HepG2 (cell line): ENCODE measurements at regions of chr2 and their contacts with region 1.

Region 1: DNA sequence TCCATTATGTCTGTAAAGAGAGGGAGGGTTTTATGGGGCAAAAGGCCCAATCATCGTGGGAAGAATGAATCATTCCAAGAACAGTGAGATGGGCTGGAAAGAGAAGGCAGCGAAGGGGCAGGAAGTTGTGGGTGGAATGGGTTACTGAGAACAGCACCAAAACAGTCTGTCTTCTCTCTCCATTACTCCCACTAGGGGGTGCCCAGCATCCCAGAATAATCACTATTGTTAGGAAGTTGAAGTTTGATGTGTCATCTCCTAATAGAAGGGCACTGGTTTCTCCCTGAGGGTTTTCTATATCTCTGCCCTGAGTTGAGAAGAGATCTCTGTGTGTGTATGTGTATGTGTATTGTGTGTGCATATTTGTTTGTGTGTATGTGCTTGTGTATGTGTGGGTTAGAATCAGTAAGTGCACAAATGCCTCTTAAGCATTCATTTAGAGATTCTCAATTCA is 76.6 kb upstream of the MAP4K3 start:
- DNase-seq: peak; percentile 83
- ATAC-seq: 0 out of 3 replicates have a peak, but pooled peaks have one; percentile 4
- H3K4me3 ChIP-seq: no peak overlapping the region
- H3K27ac ChIP-seq: peak overlapping the region; percentile 92
- H3K4me1 ChIP-seq: peaks cover 94% of the 10 kb centered on the region
- H3K27me3 ChIP-seq: no peaks in the 10 kb centered on the region
- CTCF ChIP-seq: peak; percentile 85
- EP300 ChIP-seq: peak in 1 of 2 experiments; percentile 35; a peak in 1 of 4 replicates
- POLR2A ChIP-seq: no peak
- RAD21 ChIP-seq: peak; percentile 72

Region 2: DNA sequence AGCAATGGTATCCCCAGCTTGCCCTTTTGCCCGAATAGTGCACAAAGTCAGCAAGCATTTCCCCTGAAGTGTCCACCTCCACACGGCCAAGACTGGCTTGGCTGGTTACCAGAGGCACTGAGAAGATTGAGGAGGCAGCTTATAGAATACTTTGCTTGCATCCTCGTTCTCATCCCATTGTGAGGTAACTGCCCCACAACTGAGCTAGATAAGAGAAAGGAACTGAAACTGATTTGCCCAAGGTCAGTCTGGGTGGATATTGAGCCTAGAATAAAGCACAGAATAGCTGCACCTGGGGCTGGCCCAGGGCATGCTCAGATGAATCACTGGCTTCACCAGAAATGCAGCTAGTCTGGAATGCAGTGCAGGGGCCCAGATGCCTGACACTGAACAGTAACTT is 43.9 kb before region 1 on chr2:
- CTCF ChIA-PET with region 1: no interaction called
- POLR2A ChIA-PET with region 1: interaction called, 14 read pairs
- in situ Hi-C with region 1: no loop called
- intact Hi-C with region 1: no loop called
- DNase-seq: peak; percentile 88
- ATAC-seq: peak; percentile 98
- H3K4me3 ChIP-seq: peak overlapping the region in 2 of 3 experiments; percentile 27 to 35; a peak in 2 of 6 replicates
- H3K27ac ChIP-seq: peak overlapping the region; percentile 54
- H3K4me1 ChIP-seq: peaks cover 38% of the 10 kb centered on the region
- H3K27me3 ChIP-seq: no peaks in the 10 kb centered on the region
- CTCF ChIP-seq: no peak
- EP300 ChIP-seq: no peak
- POLR2A ChIP-seq: no peak
- RAD21 ChIP-seq: no peak

Region 3: DNA sequence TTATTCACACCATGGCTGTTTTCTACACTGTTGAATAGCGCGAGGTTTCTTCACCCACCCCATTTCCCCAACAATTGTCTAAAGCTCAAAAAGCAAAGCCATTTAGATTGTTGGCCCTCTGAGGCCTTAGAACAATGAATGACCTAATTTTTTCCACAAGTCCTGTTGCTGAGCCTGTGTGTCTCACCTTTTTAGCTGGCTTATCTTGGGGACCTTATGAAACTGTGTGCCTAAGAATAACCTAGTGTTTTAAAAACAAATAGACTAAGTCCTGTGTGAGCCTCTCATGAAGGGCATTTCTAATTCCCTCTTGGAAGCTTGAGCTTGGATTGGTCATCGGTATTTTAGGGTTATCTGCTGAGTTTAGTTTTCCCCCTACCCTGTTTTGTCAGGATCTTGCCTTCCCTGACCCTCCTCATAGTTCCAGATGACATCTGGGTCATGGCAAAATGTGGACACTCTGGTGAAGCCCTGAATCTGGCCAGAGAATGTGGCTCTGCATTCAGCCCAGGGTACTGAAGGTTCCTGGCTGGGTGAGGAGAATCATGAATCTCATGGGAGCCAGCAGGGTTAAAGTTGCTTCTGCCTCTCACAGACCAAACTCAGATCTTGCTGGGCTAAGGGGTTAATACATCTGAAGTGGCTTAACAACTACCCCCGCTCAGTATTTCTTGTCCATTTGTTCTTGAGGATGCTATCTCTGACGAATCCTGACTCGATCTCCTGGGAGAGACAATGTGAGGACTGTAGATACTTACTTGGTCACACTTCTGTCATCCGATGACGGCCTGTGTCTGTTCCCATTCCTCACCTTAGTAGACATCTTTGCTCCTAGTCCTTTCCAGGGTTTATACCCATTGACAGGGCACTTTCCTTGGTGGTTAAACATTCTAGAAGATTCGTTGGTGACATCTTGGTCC is 27.6 kb after region 1 on chr2:
- CTCF ChIA-PET with region 1: no interaction called
- POLR2A ChIA-PET with region 1: interaction called, 19 read pairs
- in situ Hi-C with region 1: no loop called
- intact Hi-C with region 1: no loop called
- DNase-seq: peak; percentile 97
- ATAC-seq: peak; percentile 94
- H3K4me3 ChIP-seq: no peak overlapping the region; a peak in 1 of 6 replicates
- H3K27ac ChIP-seq: peak overlapping the region; percentile 67
- H3K4me1 ChIP-seq: peaks cover 58% of the 10 kb centered on the region
- H3K27me3 ChIP-seq: no peaks in the 10 kb centered on the region
- CTCF ChIP-seq: no peak
- EP300 ChIP-seq: peak in 1 of 2 experiments; percentile 89; a peak in 2 of 4 replicates
- POLR2A ChIP-seq: no peak
- RAD21 ChIP-seq: peak; percentile 18; the same call in 1 of the 2 replicates

Region 4: DNA sequence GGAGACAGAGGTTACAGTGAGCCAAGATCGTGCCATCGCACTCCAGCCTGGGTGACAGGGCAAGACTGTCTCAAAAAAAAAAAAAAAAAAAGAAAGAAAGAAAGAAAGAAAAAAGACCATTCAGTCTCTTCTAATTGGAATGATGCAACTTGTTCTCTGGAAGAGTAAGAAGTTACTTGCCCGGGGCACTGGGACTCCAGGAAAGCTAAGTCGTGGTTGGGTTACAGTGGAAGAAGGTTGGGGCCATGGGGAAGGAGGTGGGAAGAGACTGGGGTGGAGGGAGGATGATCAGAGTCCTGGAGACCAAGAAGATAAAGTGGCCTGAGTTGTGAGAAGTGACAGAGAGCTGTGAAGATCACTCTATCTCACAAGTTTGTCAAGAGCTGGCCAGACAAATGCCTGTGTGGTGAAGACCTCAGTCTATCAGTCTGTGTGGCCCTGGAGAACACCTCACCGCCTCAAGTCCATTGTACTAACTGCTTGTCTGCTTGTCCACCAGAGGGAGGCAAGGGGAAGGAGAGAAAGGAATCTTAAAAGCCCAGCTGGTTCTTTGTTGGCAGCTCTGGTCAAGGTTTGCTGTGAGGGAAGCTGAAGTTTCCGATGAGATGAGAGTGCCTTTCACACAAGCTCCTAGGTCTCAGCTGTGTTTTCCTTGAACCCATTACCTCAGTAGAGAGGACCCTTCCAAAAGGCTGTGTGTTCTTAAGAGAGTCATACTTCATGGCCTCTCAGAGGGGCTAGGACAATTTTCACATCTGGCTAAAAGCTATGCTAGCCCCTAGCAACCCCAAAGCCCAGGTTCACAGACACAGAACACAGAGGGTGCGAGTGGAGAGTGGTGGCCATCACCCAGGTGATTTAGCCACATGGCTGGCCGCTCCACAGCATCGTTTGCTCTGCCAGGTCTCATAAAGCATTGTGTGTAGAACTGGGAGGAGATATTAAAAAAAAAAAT is 80.0 kb after region 1 on chr2:
- CTCF ChIA-PET with region 1: no interaction called
- POLR2A ChIA-PET with region 1: interaction called, 5 read pairs
- in situ Hi-C with region 1: no loop called
- intact Hi-C with region 1: loop called (anchors 1 kb)
- DNase-seq: peak; percentile 56
- ATAC-seq: peak; percentile 90
- H3K4me3 ChIP-seq: no peak overlapping the region
- H3K27ac ChIP-seq: no peak overlapping the region
- H3K4me1 ChIP-seq: no peaks in the 10 kb centered on the region
- H3K27me3 ChIP-seq: no peaks in the 10 kb centered on the region
- CTCF ChIP-seq: peak; percentile 73
- EP300 ChIP-seq: no peak
- POLR2A ChIP-seq: no peak
- RAD21 ChIP-seq: no peak

Region 5: DNA sequence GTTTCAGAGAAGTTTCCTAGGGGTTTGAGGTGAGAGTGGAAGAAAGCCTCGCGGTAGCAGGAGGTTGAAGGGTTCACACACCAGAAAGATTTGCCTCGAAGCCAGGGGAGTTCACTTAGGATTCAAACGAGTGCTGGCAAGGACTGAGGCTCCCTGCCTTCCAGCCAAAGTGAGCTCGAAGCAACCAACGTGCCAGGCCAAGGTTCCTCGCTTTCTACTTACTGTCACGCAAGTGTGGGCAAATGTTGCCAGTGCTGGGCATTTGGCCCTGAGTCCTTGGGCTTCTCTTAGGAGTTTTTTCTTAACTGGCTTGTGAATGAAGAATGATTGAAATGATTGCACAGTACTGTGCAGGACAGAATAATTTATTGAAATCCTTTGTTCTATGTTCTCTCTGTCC is 205.6 kb after region 1 on chr2:
- CTCF ChIA-PET with region 1: no interaction called
- POLR2A ChIA-PET with region 1: interaction called, 5 read pairs
- in situ Hi-C with region 1: loop called (anchors 5 kb)
- intact Hi-C with region 1: no loop called
- DNase-seq: no peak
- ATAC-seq: no peak
- H3K4me3 ChIP-seq: no peak overlapping the region
- H3K27ac ChIP-seq: no peak overlapping the region
- H3K4me1 ChIP-seq: peaks cover 34% of the 10 kb centered on the region
- H3K27me3 ChIP-seq: peaks cover 2 to 37% of the 10 kb centered on the region in 2 experiments; a peak in 4 of 5 replicates
- CTCF ChIP-seq: no peak
- EP300 ChIP-seq: no peak
- POLR2A ChIP-seq: no peak
- RAD21 ChIP-seq: no peak